Posterior cingulate gyrus (tissue), 11 donors: ENCODE measurements at regions of chr2 and their contacts with region 1.

Region 1: GRCh38 chr2:134918526-134919340 is at the start of gene CCNT2:
- DNase-seq: peak; percentile 97 to 100 (median 99)

Region 2: DNA sequence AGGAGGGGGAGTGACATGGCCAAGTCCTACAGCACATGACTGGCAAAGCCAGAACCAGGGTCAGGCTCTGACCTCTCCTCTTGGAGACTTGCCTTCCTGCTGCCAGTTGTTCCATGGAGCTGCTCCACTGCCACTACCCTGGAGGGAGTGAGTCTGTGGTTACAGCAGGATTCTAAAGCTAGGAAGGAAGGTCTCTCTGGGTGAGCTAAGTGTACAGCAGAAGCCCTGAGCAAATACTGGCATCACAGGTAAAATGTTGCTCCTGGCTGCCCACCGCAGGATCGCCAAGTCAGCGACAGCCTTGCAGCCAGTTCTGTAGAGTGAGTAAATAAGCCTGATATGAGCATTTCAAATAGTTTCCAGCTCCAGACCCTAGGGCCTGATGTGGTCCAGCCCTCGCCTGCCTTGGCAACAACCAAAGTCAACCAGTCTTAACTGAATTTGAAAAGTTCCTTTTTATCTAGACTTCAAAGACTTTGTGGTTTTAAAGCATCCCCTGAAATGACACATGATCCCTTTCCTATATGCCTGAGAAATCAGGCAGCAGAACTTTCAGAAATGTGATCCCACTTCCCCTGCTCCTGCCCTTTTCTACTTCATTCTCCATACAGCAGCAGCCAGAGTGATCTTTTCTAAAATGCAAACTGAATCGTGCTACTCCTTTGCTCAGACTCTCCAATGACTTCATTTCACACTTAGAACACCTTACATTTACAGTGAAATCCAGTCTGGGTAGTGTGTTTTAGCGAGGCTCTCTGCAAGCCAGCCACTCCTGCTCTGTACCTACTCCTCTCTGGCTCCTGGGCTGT is 550.5 kb before region 1 on chr2:
- intact Hi-C with region 1: no loop called
- DNase-seq: peak in 1 of 10 donors; percentile 79

Region 3: DNA sequence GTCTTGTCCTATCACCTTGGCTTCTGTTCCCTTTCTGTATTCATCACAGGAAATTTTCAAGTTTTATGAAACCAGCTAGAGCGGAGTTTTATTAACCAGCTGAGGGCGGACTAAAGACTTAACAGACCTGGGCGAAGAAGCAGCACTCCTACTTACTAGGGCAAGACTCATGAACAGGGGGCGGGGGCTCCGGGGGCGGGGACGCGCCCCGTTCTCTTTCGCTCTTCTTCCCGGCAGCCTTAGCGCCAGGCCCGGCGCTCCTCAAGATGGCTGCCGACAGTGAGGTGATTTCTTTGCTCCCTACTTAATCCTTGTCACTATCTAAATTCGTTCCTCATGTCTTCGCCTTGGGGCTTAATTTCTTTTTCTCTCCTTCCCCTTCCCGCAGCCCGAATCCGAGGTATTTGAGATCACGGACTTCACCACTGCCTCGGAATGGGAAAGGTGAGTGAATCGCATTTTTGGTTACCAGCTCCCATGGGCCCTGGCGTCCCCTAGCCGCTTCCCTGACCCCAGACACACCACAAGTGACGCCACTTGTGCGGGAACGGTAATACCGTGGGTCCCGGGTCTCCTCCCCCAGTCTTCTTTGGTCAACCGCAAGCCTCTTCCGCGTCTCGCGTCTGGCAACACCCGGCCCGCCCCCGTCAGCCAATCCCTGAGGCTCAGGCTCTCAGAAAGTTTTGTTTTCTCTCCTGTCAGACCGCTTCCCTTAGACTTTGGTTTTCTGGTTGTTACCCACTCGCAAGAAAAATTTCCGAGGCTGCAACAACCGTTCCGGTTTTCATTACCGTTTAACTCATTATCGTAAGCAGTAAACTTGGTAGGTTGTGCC is 133.5 kb after region 1 on chr2 and contains the start of gene RAB3GAP1:
- intact Hi-C with region 1: loop called (anchors 10 kb)
- DNase-seq: peak; percentile 39 to 94 (median 64)

Region 4: GRCh38 chr2:135531231-135532228 is 612.8 kb after region 1 on chr2 and contains the start of gene R3HDM1:
- intact Hi-C with region 1: loop called (anchors 2 kb)
- DNase-seq: peak; percentile 92 to 99 (median 96)